ENCODE measurements at regions of chr20 and their contacts with region 1.

Region 1: DNA sequence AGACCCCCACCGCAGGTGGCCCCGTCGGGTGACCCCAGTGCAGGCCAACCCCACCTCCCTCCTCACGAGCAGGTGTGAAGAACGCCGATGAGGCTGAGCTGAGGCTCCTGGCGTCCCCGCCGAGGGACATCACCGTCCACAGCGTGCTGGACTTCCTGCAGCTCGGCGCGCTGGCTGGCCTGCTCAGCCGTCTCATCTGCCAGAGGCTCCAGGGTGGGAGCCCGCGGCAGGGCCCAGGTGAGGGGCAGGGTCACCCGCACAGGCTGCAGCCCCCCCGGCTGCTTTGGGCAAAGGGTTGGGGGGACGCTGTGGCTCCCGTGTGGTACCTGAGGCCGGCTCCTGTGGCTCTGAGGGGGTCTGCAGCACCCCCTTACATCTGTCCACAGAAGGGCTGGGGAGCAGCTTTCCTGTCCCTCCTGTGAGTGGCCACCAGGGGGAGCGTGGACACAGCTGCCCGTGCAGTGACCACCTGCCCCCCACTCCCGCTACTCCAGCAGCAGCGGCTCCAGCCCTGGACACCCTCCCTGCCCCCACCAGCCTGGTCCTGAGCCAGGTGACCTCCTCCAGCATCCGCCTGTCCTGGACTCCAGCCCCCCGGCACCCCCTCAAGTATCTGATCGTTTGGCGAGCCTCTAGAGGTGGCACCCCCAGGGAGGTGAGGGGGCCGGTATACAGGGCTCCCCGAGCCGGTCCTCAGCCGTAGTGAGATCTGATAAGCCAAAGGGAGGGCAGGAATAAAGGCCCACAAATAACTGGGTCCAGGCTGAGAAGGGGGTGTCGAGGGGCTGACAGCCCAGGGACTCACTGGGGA is 16.5 kb downstream of the COL20A1 start:
- DNase-seq: peak; percentile 62
- ATAC-seq: peak; percentile 47

Region 2: DNA sequence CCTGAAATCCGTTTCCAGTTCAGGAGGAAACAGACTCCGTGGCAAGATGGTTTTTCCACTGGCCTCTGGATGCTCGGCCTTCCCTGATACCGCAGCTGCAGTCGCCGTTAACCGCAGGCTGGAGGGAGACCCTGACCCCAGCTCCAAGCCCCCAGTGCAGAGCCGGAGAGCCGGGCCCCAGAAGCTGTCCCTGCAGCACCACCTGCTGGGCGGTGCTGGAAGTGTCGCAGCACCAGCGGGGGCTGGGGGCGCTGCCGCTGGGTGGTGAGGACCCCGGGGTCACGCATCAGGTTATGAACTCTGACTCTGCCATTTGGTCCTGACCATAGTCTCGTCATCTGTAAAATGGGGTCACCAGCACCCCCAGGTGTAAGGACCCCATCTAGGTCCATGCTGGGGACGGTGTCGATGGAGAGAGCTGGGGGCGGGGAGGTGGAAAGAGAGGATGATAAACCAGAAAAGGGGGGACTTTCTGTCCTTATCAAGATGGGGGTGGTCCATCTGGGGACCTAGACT is 72.4 kb after region 1 on chr20:
- intact Hi-C with region 1: loop called (anchors 1 kb)
- DNase-seq: no peak
- ATAC-seq: peak; percentile 23